ENCODE measurements at regions of chr4 and their contacts with region 1.

Region 1: GRCh38 chr4:25234390-25235370 is 847 bp downstream of the PI4K2B start:
- DNase-seq: peak in 7 of 9 experiments; percentile 4 to 87 (median 32)
- ATAC-seq: peak; percentile 56
- H3K4me3 ChIP-seq: peak overlapping the region; percentile 77 to 81
- H3K4me3 Mint-ChIP-seq: peak overlapping the region; percentile 84
- H3K27ac ChIP-seq: peak overlapping the region; percentile 67 to 84
- H3K27ac Mint-ChIP-seq: peak overlapping the region; percentile 89
- H3K4me1 ChIP-seq: peaks cover 11% of the 10 kb centered on the region
- H3K4me1 Mint-ChIP-seq: peaks cover 35% of the 10 kb centered on the region
- H3K27me3 ChIP-seq: no peaks in the 10 kb centered on the region
- H3K27me3 Mint-ChIP-seq: no peaks in the 10 kb centered on the region
- CTCF ChIP-seq: peak; percentile 66

Region 2: DNA sequence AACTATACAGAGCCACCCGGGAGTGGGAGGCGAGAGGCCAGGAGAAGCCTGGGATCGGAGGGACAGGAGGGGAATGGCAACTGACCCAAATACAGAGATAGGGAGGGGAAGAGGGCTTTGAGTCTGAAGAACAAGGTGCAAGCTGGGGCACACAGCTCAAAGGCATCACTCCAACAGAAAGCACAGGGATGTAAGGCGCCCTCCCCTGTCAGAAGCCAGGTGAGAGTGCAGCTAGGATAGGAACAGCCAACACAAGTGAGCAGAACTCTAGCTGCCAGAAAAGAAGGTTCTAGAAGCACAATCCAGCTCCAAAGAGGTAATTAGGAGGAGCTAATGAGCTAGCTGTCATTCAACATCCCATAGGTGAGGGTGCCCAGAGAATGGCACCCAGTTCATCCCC is 882.6 kb before region 1 on chr4:
- CTCF ChIA-PET with region 1: no interaction called
- POLR2A ChIA-PET with region 1: no interaction called
- intact Hi-C with region 1: no loop called
- DNase-seq: no peak
- ATAC-seq: no peak
- H3K4me3 ChIP-seq: no peak overlapping the region
- H3K4me3 Mint-ChIP-seq: no peak overlapping the region
- H3K27ac ChIP-seq: no peak overlapping the region
- H3K27ac Mint-ChIP-seq: no peak overlapping the region
- H3K4me1 ChIP-seq: no peaks in the 10 kb centered on the region
- H3K4me1 Mint-ChIP-seq: no peaks in the 10 kb centered on the region
- H3K27me3 ChIP-seq: peaks cover 0 to 2% of the 10 kb centered on the region in 2 experiments
- H3K27me3 Mint-ChIP-seq: peaks cover 4% of the 10 kb centered on the region
- CTCF ChIP-seq: no peak

Region 3: DNA sequence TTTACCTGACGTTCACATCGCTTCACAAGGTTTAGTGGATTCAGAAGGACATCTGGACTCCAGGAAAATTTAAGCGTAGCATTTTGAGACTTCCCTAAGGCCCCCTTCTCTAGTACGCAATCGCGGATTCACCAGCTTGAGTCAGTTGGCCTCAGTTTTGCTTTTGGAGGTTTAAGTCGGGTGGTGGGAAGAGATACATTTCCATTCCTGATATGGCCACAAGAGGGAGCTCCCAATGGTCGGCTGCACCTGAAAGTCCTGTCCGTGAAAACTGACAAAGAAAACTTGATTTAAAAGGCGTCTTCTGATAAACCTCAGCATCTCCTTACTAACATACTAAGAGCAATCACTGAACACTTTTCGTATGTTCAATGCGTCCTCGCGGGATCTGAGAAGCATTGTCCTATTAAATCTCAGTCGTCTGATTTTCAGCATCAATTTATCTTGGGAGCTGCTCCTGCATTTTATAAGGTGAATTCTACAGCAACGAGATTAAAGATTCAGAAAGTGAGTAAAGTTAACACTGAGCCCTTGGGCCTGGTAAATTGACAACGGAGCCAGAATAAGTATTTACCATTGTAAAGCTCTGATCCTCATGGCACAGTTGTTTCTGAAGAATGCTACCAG is 254.5 kb before region 1 on chr4:
- CTCF ChIA-PET with region 1: no interaction called
- POLR2A ChIA-PET with region 1: no interaction called
- intact Hi-C with region 1: loop called in 1 of 2 experiments (anchors 2 kb)
- DNase-seq: peak in 8 of 9 experiments; percentile 4 to 66 (median 42)
- ATAC-seq: no peak
- H3K4me3 ChIP-seq: no peak overlapping the region
- H3K4me3 Mint-ChIP-seq: peak overlapping the region; percentile 57
- H3K27ac ChIP-seq: no peak overlapping the region
- H3K27ac Mint-ChIP-seq: no peak overlapping the region
- H3K4me1 ChIP-seq: peaks cover 2% of the 10 kb centered on the region
- H3K4me1 Mint-ChIP-seq: peaks cover 6% of the 10 kb centered on the region
- H3K27me3 ChIP-seq: no peaks in the 10 kb centered on the region
- H3K27me3 Mint-ChIP-seq: peaks cover 17% of the 10 kb centered on the region
- CTCF ChIP-seq: peak; percentile 78

Region 4: DNA sequence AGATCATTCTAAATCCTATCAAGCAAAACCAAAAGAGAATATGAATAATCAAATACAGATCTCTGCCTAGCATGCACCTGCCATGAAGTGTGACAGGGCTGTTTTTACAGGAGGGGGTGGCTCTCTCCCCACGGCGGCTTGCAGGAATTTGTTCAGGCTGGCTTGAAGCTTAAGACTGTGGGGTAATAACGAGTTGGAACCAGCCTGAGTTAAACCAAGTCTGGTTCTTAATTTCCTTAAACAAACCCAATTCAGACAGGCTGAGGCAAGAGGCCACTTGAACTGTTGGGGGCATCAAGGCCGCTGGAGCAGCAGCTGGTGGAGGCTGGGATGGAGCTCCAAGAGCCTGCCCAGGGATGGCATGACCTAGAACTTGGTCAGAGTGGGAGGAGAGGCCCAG is 158.8 kb before region 1 on chr4:
- CTCF ChIA-PET with region 1: no interaction called
- POLR2A ChIA-PET with region 1: no interaction called
- intact Hi-C with region 1: no loop called
- DNase-seq: no peak
- ATAC-seq: no peak
- H3K4me3 ChIP-seq: no peak overlapping the region
- H3K4me3 Mint-ChIP-seq: no peak overlapping the region
- H3K27ac ChIP-seq: no peak overlapping the region
- H3K27ac Mint-ChIP-seq: no peak overlapping the region
- H3K4me1 ChIP-seq: no peaks in the 10 kb centered on the region
- H3K4me1 Mint-ChIP-seq: no peaks in the 10 kb centered on the region
- H3K27me3 ChIP-seq: no peaks in the 10 kb centered on the region
- H3K27me3 Mint-ChIP-seq: peaks cover 14% of the 10 kb centered on the region
- CTCF ChIP-seq: no peak

Region 5: GRCh38 chr4:25180524-25181131 is 54.1 kb before region 1 on chr4:
- CTCF ChIA-PET with region 1: interaction called, 3 read pairs
- POLR2A ChIA-PET with region 1: interaction called, 9 read pairs
- intact Hi-C with region 1: loop called (anchors 2 to 5 kb)
- DNase-seq: peak in 5 of 9 experiments; percentile 27 to 69 (median 40)
- ATAC-seq: peak; percentile 80
- H3K4me3 ChIP-seq: no peak overlapping the region
- H3K4me3 Mint-ChIP-seq: no peak overlapping the region
- H3K27ac ChIP-seq: no peak overlapping the region
- H3K27ac Mint-ChIP-seq: no peak overlapping the region
- H3K4me1 ChIP-seq: peaks cover 16% of the 10 kb centered on the region
- H3K4me1 Mint-ChIP-seq: peaks cover 18% of the 10 kb centered on the region
- H3K27me3 ChIP-seq: no peaks in the 10 kb centered on the region
- H3K27me3 Mint-ChIP-seq: no peaks in the 10 kb centered on the region
- CTCF ChIP-seq: peak; percentile 89

Region 6: GRCh38 chr4:25271866-25272265 is 37.2 kb after region 1 on chr4:
- CTCF ChIA-PET with region 1: no interaction called
- POLR2A ChIA-PET with region 1: no interaction called
- intact Hi-C with region 1: loop called in 1 of 2 experiments (anchors 5 kb)
- DNase-seq: no peak
- ATAC-seq: no peak
- H3K4me3 ChIP-seq: no peak overlapping the region
- H3K4me3 Mint-ChIP-seq: no peak overlapping the region
- H3K27ac ChIP-seq: no peak overlapping the region
- H3K27ac Mint-ChIP-seq: no peak overlapping the region
- H3K4me1 ChIP-seq: no peaks in the 10 kb centered on the region
- H3K4me1 Mint-ChIP-seq: no peaks in the 10 kb centered on the region
- H3K27me3 ChIP-seq: no peaks in the 10 kb centered on the region
- H3K27me3 Mint-ChIP-seq: no peaks in the 10 kb centered on the region
- CTCF ChIP-seq: no peak

Region 7: DNA sequence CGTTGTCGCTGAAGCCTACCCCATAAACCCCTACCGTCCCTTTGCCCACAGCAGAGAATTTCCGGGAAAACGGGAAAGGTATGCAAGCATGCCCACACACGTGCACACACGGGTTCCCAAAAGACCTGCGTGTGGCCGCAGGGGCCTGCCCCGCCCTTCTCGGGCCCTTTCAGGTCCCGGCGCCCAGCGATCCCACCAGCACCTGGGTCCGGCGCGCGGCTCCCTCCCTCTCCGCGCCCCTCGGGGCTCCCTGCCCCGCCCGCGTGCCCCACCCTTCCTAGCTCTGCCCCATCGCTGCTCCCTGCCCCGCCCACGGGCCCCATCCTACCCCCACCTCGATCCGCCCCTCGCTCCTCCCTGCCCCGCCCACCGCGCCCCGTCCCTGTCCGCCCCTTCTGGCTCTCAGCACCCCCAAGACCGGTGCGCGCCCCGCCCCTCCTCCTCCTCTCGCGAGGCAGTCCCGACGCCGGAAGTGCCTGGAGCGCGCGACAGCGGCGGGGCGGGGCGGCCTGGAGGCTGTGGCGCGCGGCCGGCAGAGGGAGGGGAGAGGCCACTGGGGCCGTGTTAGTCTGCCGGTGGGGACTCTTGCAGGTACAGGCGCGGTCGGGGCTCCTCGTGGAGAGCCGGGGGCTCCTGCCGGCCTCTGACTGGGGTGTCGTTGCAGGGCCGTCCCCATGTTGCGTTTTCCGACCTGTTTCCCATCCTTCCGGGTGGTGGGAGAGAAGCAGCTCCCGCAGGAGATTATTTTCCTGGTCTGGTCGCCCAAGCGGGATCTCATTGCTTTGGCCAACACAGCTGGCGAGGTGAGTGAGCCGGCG is 142.3 kb after region 1 on chr4 and contains the start of gene ANAPC4:
- CTCF ChIA-PET with region 1: no interaction called
- POLR2A ChIA-PET with region 1: interaction called, 4 read pairs
- intact Hi-C with region 1: loop called (anchors 1 to 2 kb)
- DNase-seq: peak; percentile 95 to 100 (median 98)
- ATAC-seq: peak; percentile 95
- H3K4me3 ChIP-seq: peak within 1 kb of the TSS; percentile 89 to 96
- H3K4me3 Mint-ChIP-seq: no peak within 1 kb of the TSS
- H3K27ac ChIP-seq: peak within 1 kb of the TSS; percentile 60 to 64
- H3K27ac Mint-ChIP-seq: peak within 1 kb of the TSS; percentile 90
- H3K4me1 ChIP-seq: peaks cover 21% of the 10 kb centered on the region
- H3K4me1 Mint-ChIP-seq: peaks cover 16% of the 10 kb centered on the region
- H3K27me3 ChIP-seq: no peaks in the 10 kb centered on the region
- H3K27me3 Mint-ChIP-seq: no peaks in the 10 kb centered on the region
- CTCF ChIP-seq: no peak
- total RNA-seq, gene ANAPC4: 28.0 to 30.5 TPM

Region 8: GRCh38 chr4:25486171-25486570 is 251.5 kb after region 1 on chr4:
- CTCF ChIA-PET with region 1: no interaction called
- POLR2A ChIA-PET with region 1: no interaction called
- intact Hi-C with region 1: no loop called
- DNase-seq: no peak
- ATAC-seq: no peak
- H3K4me3 ChIP-seq: no peak overlapping the region
- H3K4me3 Mint-ChIP-seq: no peak overlapping the region
- H3K27ac ChIP-seq: no peak overlapping the region
- H3K27ac Mint-ChIP-seq: no peak overlapping the region
- H3K4me1 ChIP-seq: no peaks in the 10 kb centered on the region
- H3K4me1 Mint-ChIP-seq: no peaks in the 10 kb centered on the region
- H3K27me3 ChIP-seq: peaks cover 0 to 3% of the 10 kb centered on the region in 2 experiments
- H3K27me3 Mint-ChIP-seq: peaks cover 6% of the 10 kb centered on the region
- CTCF ChIP-seq: no peak

Region 9: GRCh38 chr4:26319467-26319948 is 1084.8 kb after region 1 on chr4:
- CTCF ChIA-PET with region 1: no interaction called
- POLR2A ChIA-PET with region 1: no interaction called
- intact Hi-C with region 1: loop called in 1 of 2 experiments (anchors 10 kb)
- DNase-seq: peak; percentile 91 to 99 (median 96)
- ATAC-seq: peak; percentile 60
- H3K4me3 ChIP-seq: peak overlapping the region; percentile 91 to 100
- H3K4me3 Mint-ChIP-seq: peak overlapping the region; percentile 99
- H3K27ac ChIP-seq: peak overlapping the region; percentile 83 to 89
- H3K27ac Mint-ChIP-seq: peak overlapping the region; percentile 100
- H3K4me1 ChIP-seq: peaks cover 14% of the 10 kb centered on the region
- H3K4me1 Mint-ChIP-seq: peaks cover 37% of the 10 kb centered on the region
- H3K27me3 ChIP-seq: no peaks in the 10 kb centered on the region
- H3K27me3 Mint-ChIP-seq: no peaks in the 10 kb centered on the region
- CTCF ChIP-seq: no peak